ENCODE measurements at regions of chr15 and their contacts with region 1.

Region 1: GRCh38 chr15:90648137-90649070 is 68.7 kb upstream of the BLM start:
- DNase-seq: peak in 3 of 6 donors; percentile 34 to 62 (median 51)
- ATAC-seq: peak; percentile 80 to 93 (median 82)
- H3K4me3 ChIP-seq: no peak overlapping the region
- H3K27ac ChIP-seq: peak overlapping the region in 2 of 4 donors; percentile 32 to 65
- H3K4me1 ChIP-seq: peaks cover 0 to 4% (median 0%) of the 10 kb centered on the region in 3 donors
- H3K27me3 ChIP-seq: no peaks in the 10 kb centered on the region
- CTCF ChIP-seq: peak; percentile 71 to 84 (median 74)

Region 2: GRCh38 chr15:90729261-90729660 is 80.9 kb after region 1 on chr15:
- intact Hi-C with region 1: no loop called
- DNase-seq: no peak
- ATAC-seq: no peak
- H3K4me3 ChIP-seq: no peak overlapping the region
- H3K27ac ChIP-seq: no peak overlapping the region
- H3K4me1 ChIP-seq: no peaks in the 10 kb centered on the region
- H3K27me3 ChIP-seq: no peaks in the 10 kb centered on the region
- CTCF ChIP-seq: no peak

Region 3: DNA sequence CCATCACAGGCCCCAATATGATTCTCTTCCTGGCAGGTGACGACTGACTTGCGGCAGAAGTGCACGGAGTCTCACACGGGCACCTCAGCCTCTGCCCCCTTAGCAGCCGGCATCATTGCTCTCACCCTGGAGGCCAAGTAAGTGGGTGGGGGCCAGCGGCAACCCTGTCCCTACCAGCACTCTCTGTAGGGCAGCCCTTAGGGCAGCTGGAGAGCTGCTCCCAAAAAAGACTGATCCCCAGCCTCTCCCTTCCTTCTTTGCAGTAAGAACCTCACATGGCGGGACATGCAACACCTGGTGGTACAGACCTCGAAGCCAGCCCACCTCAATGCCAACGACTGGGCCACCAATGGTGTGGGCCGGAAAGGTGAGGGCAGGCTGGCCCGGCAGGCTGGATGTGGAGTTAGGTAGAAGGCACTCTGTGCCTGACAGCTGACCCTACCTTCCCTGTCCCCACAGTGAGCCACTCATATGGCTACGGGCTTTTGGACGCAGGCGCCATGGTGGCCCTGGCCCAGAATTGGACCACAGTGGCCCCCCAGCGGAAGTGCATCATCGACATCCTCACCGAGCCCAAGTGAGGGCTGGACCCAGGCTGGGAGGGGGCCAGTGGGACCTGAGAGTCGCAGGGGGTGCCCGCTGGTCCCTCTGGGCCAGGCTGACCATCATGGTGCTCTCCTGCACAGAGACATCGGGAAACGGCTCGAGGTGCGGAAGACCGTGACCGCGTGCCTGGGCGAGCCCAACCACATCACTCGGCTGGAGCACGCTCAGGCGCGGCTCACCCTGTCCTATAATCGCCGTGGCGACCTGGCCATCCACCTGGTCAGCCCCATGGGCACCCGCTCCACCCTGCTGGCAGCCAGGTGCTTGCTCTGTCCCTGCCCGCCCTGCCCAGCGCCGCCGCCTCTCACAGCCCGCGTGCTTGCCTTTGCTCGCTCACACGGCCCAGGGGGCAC is 231.3 kb after region 1 on chr15:
- intact Hi-C with region 1: loop called in 1 of 3 experiments (anchors 5 kb)
- DNase-seq: peak in 3 of 6 donors; percentile 46 to 69 (median 57)
- ATAC-seq: no peak
- H3K4me3 ChIP-seq: no peak overlapping the region
- H3K27ac ChIP-seq: no peak overlapping the region
- H3K4me1 ChIP-seq: peaks cover 0 to 23% (median 5%) of the 10 kb centered on the region in 3 donors
- H3K27me3 ChIP-seq: no peaks in the 10 kb centered on the region
- CTCF ChIP-seq: no peak

Region 4: GRCh38 chr15:90886041-90886614 is 237.7 kb after region 1 on chr15:
- intact Hi-C with region 1: loop called in 2 of 3 experiments (anchors 2 to 5 kb)
- DNase-seq: peak in 5 of 6 donors; percentile 54 to 89 (median 77)
- ATAC-seq: peak; percentile 37 to 74 (median 70)
- H3K4me3 ChIP-seq: peak overlapping the region in 1 of 4 donors; percentile 43
- H3K27ac ChIP-seq: peak overlapping the region in 3 of 4 donors; percentile 78 to 88 (median 85)
- H3K4me1 ChIP-seq: peaks cover 0 to 23% (median 0%) of the 10 kb centered on the region in 3 donors
- H3K27me3 ChIP-seq: no peaks in the 10 kb centered on the region
- CTCF ChIP-seq: peak; percentile 91 to 97 (median 92)

Measured in pancreas (tissue), 10 donors.